IMR-90 (cell line): ENCODE measurements at regions of chr3 and their contacts with region 1.

Region 1: GRCh38 chr3:114152519-114153151 is 26.2 kb downstream of the DRD3 start:
- DNase-seq: peak; percentile 61
- ATAC-seq: peak; percentile 90
- H3K4me3 ChIP-seq: peak overlapping the region; percentile 50
- H3K27ac ChIP-seq: no peak overlapping the region
- H3K4me1 ChIP-seq: no peaks in the 10 kb centered on the region
- H3K27me3 ChIP-seq: no peaks in the 10 kb centered on the region; the same call in 1 of the 2 replicates
- CTCF ChIP-seq: peak; percentile 78
- POLR2A ChIP-seq: no peak
- RAD21 ChIP-seq: peak; percentile 70

Region 2: DNA sequence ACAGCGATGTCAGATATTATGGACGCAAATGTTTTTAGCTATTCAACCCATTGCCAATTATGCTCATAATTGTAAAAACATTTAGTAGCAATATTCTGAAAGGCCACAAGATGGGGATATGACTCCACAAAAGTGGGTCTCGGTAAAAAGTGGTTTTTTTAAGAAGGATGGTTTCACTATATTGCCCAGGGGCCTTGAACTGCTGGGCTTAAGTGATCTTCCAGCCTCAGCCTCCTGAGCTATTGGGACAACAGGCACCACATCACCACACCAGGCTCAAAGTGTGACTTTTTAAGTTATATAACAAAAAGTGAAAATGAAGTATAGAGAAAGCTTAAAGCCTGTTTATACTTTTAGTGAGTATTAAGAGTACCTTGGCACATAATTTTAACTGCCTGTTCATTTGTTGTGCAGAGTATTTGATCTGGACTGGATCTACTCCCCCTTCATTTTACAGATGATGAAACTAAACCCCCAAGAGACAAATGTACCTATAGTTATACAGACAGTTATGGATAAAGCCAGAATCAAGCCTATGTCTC is 416.0 kb before region 1 on chr3:
- CTCF ChIA-PET with region 1: interaction called, 3 read pairs
- POLR2A ChIA-PET with region 1: no interaction called
- dilution Hi-C with region 1: no loop called
- in situ Hi-C with region 1: loop called (anchors 10 kb)
- intact Hi-C with region 1: loop called (anchors 5 kb)
- DNase-seq: peak; percentile 73
- ATAC-seq: peak; percentile 83
- H3K4me3 ChIP-seq: no peak overlapping the region
- H3K27ac ChIP-seq: no peak overlapping the region
- H3K4me1 ChIP-seq: peaks cover 6% of the 10 kb centered on the region; the same call in 1 of the 2 replicates
- H3K27me3 ChIP-seq: no peaks in the 10 kb centered on the region
- CTCF ChIP-seq: peak; percentile 79
- POLR2A ChIP-seq: peak; percentile 27; the same call in 1 of the 2 replicates
- RAD21 ChIP-seq: peak; percentile 84

Region 3: DNA sequence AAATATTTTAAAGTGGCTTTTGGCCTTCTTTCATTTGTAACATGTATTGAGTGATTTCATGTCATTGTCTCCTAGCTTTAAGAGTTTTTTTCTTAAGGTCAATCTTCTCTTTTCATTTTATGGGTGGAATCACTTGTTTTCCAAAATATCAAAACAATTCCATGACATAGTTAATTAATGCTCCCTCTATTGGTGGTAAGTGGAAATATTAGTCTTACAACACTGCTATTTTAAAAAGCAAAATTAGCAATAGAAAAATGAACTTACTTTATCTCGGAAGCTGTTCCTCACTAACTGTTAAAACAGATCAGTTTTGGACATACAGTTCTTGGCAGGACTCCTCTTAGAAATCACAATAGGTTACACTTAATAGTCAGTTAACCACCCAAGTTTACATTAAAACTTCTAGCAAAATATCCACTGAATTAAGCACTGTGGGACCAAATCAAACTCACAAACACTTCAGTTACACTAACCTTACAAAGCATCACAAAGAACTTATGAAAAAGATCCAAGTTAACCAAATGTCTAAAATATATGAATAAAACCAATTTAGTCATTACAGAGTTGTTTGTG is 183.6 kb after region 1 on chr3:
- CTCF ChIA-PET with region 1: no interaction called
- POLR2A ChIA-PET with region 1: no interaction called
- dilution Hi-C with region 1: no loop called
- in situ Hi-C with region 1: no loop called
- intact Hi-C with region 1: loop called (anchors 10 kb)
- DNase-seq: peak; percentile 18
- ATAC-seq: no peak
- H3K4me3 ChIP-seq: no peak overlapping the region
- H3K27ac ChIP-seq: no peak overlapping the region
- H3K4me1 ChIP-seq: no peaks in the 10 kb centered on the region
- H3K27me3 ChIP-seq: no peaks in the 10 kb centered on the region
- CTCF ChIP-seq: peak; percentile 55
- POLR2A ChIP-seq: no peak
- RAD21 ChIP-seq: peak; percentile 24

Region 4: DNA sequence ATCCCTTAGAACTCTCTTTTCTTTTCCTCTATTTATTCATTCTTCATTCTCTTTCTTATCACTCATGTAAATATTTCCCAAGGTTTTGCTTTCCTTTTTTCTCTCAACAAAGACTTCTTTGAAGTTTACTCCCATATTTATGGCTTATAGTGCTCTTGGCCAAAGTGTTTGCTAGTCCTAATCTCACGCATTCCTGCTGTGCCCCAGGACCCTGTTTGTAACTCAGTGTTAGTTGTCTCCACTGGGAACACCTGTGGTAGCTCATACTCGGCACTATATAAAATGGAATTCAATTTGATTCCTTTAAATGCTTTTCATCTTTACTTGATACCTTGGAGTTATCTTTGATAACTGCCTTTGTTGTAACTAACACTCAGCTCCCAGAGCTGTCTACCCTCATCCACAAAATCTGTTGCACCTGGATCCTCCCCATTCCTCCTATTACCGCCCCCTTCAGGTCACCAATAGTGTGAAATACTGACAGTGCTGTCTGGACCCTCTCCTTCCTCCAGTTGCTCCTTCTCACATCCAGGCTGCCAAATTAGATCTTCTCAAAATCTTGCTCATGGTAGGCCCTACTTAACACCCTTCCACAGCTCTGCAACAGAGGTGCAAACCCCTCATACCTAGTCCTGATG is 218.0 kb after region 1 on chr3:
- CTCF ChIA-PET with region 1: no interaction called
- POLR2A ChIA-PET with region 1: no interaction called
- dilution Hi-C with region 1: no loop called
- in situ Hi-C with region 1: no loop called
- intact Hi-C with region 1: no loop called
- DNase-seq: no peak
- ATAC-seq: no peak
- H3K4me3 ChIP-seq: no peak overlapping the region
- H3K27ac ChIP-seq: no peak overlapping the region
- H3K4me1 ChIP-seq: no peaks in the 10 kb centered on the region; the same call in 1 of the 2 replicates
- H3K27me3 ChIP-seq: no peaks in the 10 kb centered on the region
- CTCF ChIP-seq: no peak
- POLR2A ChIP-seq: no peak
- RAD21 ChIP-seq: no peak

Region 5: DNA sequence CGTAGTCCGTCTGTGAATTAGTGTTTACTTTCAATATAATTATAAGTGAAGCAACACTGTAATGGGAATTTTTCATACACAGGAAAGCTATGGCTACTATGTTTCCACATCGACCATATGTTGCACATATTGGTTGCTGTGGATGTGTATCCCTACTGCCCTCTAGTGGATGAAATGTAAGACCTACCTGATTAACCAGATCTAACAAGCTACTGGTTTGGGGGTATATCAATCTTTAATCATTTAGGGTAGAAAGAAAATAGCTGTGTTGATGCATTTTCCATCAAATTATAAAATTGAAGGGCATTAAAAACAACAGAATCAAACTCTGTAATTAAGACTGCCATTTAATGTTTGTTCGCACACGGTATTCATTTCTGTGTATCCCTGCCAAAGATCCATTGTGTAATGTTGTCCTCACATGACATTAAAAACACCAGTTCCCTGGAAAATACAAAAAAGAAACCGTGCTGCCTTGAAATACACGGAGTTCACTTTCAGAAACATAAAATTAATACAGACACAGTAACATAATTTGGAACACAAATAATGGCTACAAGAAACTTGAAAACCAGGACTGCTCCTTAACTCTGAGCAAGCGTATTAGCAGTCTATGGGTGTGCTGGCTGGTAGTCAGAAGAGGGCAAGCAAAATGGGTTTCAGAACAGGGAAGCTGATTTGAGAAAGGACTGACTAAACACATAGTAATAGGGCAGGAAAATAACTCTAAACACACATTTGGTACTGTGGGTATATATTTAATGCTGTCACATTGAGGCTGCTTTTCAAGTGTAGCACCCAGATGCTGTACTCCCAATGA is 266.3 kb after region 1 on chr3:
- CTCF ChIA-PET with region 1: no interaction called
- POLR2A ChIA-PET with region 1: no interaction called
- dilution Hi-C with region 1: no loop called
- in situ Hi-C with region 1: no loop called
- intact Hi-C with region 1: loop called (anchors 2 kb)
- DNase-seq: peak; percentile 95
- ATAC-seq: peak; percentile 93
- H3K4me3 ChIP-seq: no peak overlapping the region
- H3K27ac ChIP-seq: peak overlapping the region; percentile 15; the same call in 1 of the 2 replicates
- H3K4me1 ChIP-seq: peaks cover 4% of the 10 kb centered on the region; the same call in 1 of the 2 replicates
- H3K27me3 ChIP-seq: no peaks in the 10 kb centered on the region
- CTCF ChIP-seq: peak; percentile 77
- POLR2A ChIP-seq: no peak
- RAD21 ChIP-seq: peak; percentile 71

Region 6: DNA sequence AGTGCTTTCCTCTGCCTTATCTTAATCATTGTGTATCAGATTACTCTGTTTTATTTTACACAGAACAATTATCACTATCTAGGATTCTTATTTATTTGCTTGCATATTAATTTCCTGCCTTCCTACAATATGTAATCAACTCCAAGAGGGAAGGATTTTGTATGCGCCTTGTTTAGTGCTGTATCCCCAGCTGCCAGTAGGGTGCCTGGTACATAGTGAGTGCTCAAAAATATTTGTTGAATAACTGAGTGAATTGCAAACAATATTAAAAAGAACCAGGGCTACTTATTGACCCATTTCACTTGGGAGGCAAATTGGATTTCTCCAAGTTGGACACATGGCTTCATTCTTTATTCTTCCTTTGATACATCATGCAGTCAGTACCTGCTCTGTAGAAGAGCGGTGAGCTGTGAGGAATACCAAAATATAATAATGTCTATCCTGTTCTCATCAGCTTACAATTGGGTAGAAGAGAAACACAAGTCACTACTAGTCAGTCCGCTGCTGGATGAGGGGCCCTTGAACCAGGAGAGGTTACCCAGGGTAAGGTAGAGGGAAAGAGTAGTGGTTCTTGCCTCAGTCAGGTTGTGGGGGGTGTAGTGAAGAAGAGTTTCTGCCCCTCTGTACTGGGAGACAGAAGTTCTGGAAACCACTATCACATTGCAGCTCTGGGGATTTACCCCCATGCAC is 1228.4 kb after region 1 on chr3:
- CTCF ChIA-PET with region 1: no interaction called
- POLR2A ChIA-PET with region 1: no interaction called
- dilution Hi-C with region 1: no loop called
- in situ Hi-C with region 1: no loop called
- intact Hi-C with region 1: no loop called
- DNase-seq: no peak
- ATAC-seq: no peak
- H3K4me3 ChIP-seq: no peak overlapping the region
- H3K27ac ChIP-seq: no peak overlapping the region
- H3K4me1 ChIP-seq: peaks cover 2% of the 10 kb centered on the region; the same call in 1 of the 2 replicates
- H3K27me3 ChIP-seq: no peaks in the 10 kb centered on the region
- CTCF ChIP-seq: no peak
- POLR2A ChIP-seq: no peak
- RAD21 ChIP-seq: no peak